Heart left ventricle (tissue), 16 donors: ENCODE measurements at regions of chr21 and their contacts with region 1.

Region 1: GRCh38 chr21:39867198-39867650 is at the start of gene PCP4:
- DNase-seq: peak in 3 of 5 donors; percentile 23 to 29 (median 24)
- ATAC-seq: no peak
- H3K4me3 ChIP-seq: no peak within 1 kb of the TSS
- H3K27ac ChIP-seq: peak within 1 kb of the TSS in 1 of 12 donors; percentile 62
- H3K4me1 ChIP-seq: no peaks in the 10 kb centered on the region
- H3K27me3 ChIP-seq: no peaks in the 10 kb centered on the region
- CTCF ChIP-seq: peak; percentile 53 to 83 (median 70)
- POLR2A ChIP-seq: no peak
- total RNA-seq, gene PCP4: 0.96 to 7.7 (median 3.9) TPM

Region 2: DNA sequence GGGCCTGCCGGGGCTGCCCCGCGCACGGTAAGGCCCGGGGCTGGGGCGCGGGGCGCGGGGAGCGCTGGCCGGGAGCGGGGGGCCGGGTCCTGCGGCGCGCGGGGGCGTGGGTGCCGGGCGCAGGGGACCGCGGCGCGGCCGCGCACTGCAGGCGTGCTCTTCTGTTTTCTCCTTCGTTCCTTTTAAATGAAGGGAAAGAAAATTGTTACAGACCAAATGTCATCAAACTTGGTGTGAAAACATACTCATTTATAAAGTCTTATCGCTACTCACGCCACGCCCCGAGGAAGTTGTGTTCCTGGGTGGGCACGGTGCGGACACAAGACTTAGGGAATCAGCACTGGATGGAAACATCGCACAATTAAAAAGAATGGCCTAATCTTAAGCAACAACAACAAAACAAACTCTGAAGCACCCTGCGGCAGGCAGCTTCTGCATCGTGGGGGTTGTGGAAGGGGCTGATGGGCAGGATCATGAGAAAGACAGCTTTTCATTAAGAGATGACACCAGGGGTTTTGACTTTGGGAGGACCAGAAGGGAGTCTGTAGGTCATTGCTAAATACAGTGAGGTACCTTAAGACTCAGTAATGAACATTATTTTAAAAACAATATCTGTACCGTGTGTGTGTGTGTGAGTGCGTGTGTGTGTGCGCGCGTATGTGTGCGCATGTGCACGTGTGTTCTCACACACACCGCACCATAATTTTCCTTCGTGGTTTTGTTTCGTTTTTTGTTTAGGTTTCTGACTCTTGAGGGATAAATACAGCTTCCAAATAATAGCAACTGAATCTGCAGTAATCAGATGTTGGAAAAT is 254.0 kb before region 1 on chr21:
- intact Hi-C with region 1: no loop called
- DNase-seq: no peak
- ATAC-seq: no peak
- H3K4me3 ChIP-seq: peak overlapping the region in 11 of 12 donors; percentile 2 to 54 (median 44)
- H3K27ac ChIP-seq: no peak overlapping the region
- H3K4me1 ChIP-seq: peaks cover 0 to 7% (median 0%) of the 10 kb centered on the region in 12 donors
- H3K27me3 ChIP-seq: peaks cover 0 to 44% (median 19%) of the 10 kb centered on the region in 9 donors
- CTCF ChIP-seq: no peak
- POLR2A ChIP-seq: no peak

Region 3: DNA sequence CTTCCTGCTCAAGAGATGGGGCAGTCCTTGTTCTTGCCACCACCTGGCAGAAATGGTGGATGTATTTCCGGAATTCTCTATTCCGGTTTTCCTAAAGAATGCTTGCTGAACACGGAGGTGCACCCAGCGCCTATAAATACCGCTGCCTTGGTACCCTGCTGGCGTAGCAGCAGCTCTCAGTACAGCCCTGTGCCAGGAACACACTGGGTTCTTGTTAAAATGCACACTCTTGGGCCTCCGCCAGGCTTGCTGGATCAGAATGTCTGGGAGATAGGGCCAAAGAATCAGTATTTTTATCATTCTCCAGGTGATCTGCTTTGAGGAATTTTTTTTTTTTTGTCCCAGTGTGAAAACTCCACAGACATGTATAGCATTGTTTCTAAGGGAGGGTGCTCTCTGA is 68.0 kb before region 1 on chr21:
- intact Hi-C with region 1: loop called in 1 of 10 experiments (anchors 5 kb)
- DNase-seq: peak in 4 of 5 donors; percentile 20 to 68 (median 44)
- ATAC-seq: peak; percentile 83 to 91 (median 90)
- H3K4me3 ChIP-seq: no peak overlapping the region
- H3K27ac ChIP-seq: no peak overlapping the region
- H3K4me1 ChIP-seq: peaks cover 0 to 16% (median 0%) of the 10 kb centered on the region in 12 donors
- H3K27me3 ChIP-seq: no peaks in the 10 kb centered on the region
- CTCF ChIP-seq: no peak
- POLR2A ChIP-seq: no peak